Activated CD4-positive, alpha-beta memory T cell treated with anti-CD3 and anti-CD28 coated beads for 36 hours (primary cell): ENCODE measurements at regions of chr7 and their contacts with region 1.

Region 1: DNA sequence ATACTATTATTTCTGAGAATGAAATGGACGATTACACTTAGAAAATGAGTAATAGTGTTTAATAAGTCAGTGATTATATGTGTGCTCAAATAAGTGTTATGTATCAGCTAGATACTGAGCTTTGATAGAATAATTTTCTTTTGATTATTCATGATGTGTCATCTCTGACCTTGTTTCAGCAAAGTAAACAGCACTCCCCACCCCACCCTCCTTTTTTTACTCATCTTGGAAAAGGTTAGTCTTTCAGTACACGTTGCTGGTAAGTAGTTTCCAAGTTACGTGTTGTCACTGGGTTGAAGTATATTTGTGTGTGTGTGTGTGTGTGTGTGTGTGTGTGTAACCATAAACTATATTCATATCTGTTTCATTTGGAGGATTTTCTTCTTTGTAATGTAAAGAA is 84.1 kb downstream of the GNAI1 start:
- DNase-seq: no peak
- H3K4me3 Mint-ChIP-seq: no peak overlapping the region
- H3K27ac Mint-ChIP-seq: no peak overlapping the region
- H3K4me1 Mint-ChIP-seq: no peaks in the 10 kb centered on the region
- H3K27me3 Mint-ChIP-seq: no peaks in the 10 kb centered on the region

Region 2: GRCh38 chr7:79876848-79877252 is 341.9 kb before region 1 on chr7:
- CTCF ChIA-PET with region 1: no interaction called
- POLR2A ChIA-PET with region 1: no interaction called
- intact Hi-C with region 1: no loop called
- DNase-seq: no peak
- H3K4me3 Mint-ChIP-seq: no peak overlapping the region
- H3K27ac Mint-ChIP-seq: no peak overlapping the region
- H3K4me1 Mint-ChIP-seq: no peaks in the 10 kb centered on the region
- H3K27me3 Mint-ChIP-seq: no peaks in the 10 kb centered on the region

Region 3: GRCh38 chr7:80277434-80278427 is 59.0 kb after region 1 on chr7:
- CTCF ChIA-PET with region 1: no interaction called
- POLR2A ChIA-PET with region 1: no interaction called
- intact Hi-C with region 1: loop called (anchors 10 kb)
- DNase-seq: no peak
- H3K4me3 Mint-ChIP-seq: no peak overlapping the region
- H3K27ac Mint-ChIP-seq: no peak overlapping the region
- H3K4me1 Mint-ChIP-seq: no peaks in the 10 kb centered on the region
- H3K27me3 Mint-ChIP-seq: no peaks in the 10 kb centered on the region